ENCODE measurements at regions of chr9 and their contacts with region 1.

Region 1: GRCh38 chr9:71683598-71684235 is 84.6 kb downstream of the CEMIP2 start:
- DNase-seq: peak in 1 of 3 donors; percentile 27
- ATAC-seq: no peak
- H3K4me3 ChIP-seq: no peak overlapping the region
- H3K4me1 ChIP-seq: peaks cover 25% of the 10 kb centered on the region
- CTCF ChIP-seq: no peak

Region 2: GRCh38 chr9:71604197-71605063 is 79.3 kb before region 1 on chr9:
- intact Hi-C with region 1: loop called in 1 of 2 experiments (anchors 5 kb)
- DNase-seq: peak; percentile 46 to 92 (median 81)
- ATAC-seq: peak; percentile 90
- H3K4me3 ChIP-seq: no peak overlapping the region
- H3K4me1 ChIP-seq: no peaks in the 10 kb centered on the region
- CTCF ChIP-seq: peak; percentile 77

Region 3: GRCh38 chr9:71628247-71628646 is 55.5 kb before region 1 on chr9:
- intact Hi-C with region 1: no loop called
- DNase-seq: no peak
- ATAC-seq: peak; percentile 25
- H3K4me3 ChIP-seq: no peak overlapping the region
- H3K4me1 ChIP-seq: no peaks in the 10 kb centered on the region
- CTCF ChIP-seq: no peak

Measured in mucosa of descending colon (tissue), 3 donors.